ENCODE measurements at regions of chr4 and their contacts with region 1.

Region 1: DNA sequence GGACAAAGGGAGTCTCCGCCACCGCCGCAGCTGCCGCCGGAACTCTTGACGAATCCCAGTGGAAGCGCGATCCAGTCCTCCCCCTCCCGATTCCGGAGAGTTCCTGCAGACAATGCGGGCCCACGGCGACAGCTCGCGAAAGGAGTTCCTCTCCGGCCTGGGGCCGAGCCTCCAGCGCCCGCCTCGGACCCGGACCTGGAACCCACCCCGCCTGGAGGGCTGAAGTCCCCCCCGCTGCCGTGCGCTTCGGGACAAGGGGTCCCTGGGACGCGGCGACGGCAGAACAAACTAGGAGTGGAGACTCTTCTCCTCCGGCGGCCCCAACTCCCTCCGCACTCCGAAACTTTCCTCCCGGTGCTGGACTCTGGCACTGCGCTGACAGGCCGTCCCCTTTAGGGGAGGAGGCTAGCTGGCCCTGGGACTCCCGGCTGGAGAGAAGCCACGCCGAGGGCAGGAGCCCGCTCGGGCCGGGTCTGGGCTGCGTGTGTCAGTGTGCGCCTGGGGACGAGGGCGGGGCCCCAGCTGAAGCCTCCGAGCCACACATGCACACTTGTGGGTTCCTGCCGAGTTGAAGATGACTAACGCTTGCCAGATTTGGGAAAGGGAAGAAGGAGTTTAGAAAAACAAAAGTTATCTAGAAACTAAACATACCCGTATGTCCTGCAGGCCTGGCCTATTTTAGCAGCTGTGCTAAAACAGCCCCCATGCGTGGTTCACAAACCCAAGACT is at the start of gene ANTXR2:
- DNase-seq: peak; percentile 71
- CTCF ChIP-seq: no peak

Region 2: GRCh38 chr4:80058740-80059139 is 14.2 kb before region 1 on chr4:
- CTCF ChIA-PET with region 1: interaction called, 11 read pairs
- POLR2A ChIA-PET with region 1: no interaction called
- DNase-seq: peak; percentile 50
- CTCF ChIP-seq: no peak

Region 3: DNA sequence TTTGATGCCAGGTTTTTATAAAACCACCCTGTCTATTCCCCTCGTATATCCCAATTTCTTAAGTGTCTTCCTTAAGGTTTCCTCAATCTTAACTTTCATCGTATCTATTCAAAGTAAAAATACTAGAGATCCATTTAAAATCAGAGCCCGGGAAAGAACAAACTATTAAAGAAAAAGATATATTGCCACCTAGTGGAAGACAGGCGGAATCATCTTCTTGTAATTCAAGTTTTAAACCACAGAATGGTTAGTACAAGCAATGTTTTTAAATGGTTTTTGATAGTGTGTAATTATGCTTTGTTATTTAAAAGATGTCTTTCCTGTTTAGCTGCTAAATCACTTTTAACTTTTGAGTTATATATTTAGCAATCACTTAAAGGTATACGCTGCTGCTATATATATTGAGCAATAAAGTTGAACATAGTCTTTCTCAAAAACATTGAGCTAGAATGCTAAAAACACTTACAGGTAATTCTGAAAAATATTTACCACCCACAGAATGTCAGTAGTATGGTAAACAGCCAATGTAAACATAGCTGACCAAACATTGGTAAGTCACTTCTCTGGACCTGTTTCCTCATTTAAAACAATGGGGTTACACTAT is 142.6 kb after region 1 on chr4:
- CTCF ChIA-PET with region 1: no interaction called
- POLR2A ChIA-PET with region 1: no interaction called
- DNase-seq: peak; percentile 29
- CTCF ChIP-seq: peak; percentile 63

Measured in GM10248 (cell line).